ENCODE measurements at regions of chr17 and their contacts with region 1.

Region 1: DNA sequence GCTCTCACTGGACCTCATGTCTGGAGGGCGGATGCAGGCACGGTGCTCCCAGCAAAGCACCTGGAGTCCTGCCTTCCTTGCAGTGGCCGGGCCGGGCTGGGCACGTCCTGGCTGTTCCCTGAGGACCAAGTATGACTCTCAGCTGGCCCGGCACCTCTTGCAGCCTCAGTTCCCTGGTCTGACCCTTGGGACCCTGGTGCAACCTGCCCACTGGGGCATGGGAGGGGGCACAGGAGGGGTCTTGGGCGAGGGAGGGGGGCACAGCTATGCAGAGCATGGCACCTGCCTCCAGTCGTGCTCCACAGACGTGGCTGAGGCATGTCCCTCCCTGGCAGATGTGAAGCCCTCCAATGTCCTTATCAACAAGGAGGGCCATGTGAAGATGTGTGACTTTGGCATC is 19.6 kb downstream of the MAP2K3 start:
- DNase-seq: no peak
- H3K4me3 ChIP-seq: no peak overlapping the region
- H3K27ac ChIP-seq: no peak overlapping the region
- H3K4me1 ChIP-seq: no peaks in the 10 kb centered on the region
- H3K27me3 ChIP-seq: no peaks in the 10 kb centered on the region

Region 2: GRCh38 chr17:21756856-21757619 is 452.9 kb after region 1 on chr17:
- in situ Hi-C with region 1: loop called (anchors 25 kb)
- DNase-seq: no peak
- H3K4me3 ChIP-seq: no peak overlapping the region
- H3K27ac ChIP-seq: no peak overlapping the region
- H3K4me1 ChIP-seq: no peaks in the 10 kb centered on the region
- H3K27me3 ChIP-seq: no peaks in the 10 kb centered on the region